Ovary (tissue), 10 donors: ENCODE measurements at regions of chr12 and their contacts with region 1.

Region 1: GRCh38 chr12:110888256-110888991 is 32.0 kb downstream of the MYL2 start:
- DNase-seq: no peak
- H3K4me3 ChIP-seq: no peak overlapping the region
- H3K27ac ChIP-seq: no peak overlapping the region
- H3K4me1 ChIP-seq: no peaks in the 10 kb centered on the region
- H3K27me3 ChIP-seq: no peaks in the 10 kb centered on the region
- CTCF ChIP-seq: no peak
- EP300 ChIP-seq: no peak
- POLR2A ChIP-seq: no peak

Region 2: DNA sequence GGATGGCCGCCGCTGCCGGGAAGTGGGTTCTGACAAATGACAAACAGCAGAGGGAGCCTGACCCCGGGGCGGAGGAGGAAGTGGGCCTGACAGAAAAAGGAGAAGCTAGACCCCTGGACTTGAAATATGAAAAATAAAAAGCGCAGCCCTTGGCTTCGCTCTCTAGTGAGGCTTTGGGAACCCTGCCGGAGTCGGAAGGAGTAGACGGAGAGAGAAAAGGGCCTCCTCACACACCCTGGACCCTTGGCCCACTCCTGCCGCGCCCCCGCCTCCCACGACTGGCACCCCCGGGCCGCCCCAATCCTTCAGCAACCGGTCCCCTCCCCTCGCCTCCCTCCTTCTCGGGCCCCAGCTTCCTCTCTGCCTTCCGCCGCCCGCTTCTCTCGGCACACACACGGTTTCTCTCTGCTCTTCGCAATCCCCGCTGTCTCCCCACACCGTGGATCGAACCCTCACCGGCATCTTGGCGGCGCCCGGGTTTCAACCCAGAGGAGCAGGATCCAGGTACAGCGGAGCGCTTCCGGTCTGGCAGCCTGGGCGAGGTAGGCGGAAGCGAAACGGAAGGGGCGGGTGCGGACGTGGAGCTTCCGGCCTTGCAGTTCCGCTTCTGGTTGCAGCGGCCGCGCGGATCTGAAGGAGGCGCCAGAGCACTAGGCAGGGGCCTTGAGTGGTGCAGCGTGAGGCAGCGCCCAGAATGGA is 438.5 kb before region 1 on chr12 and contains the start of gene ARPC3:
- intact Hi-C with region 1: loop called in 2 of 4 experiments (anchors 5 to 10 kb)
- DNase-seq: peak; percentile 93 to 96 (median 95)
- H3K4me3 ChIP-seq: peak within 1 kb of the TSS; percentile 90
- H3K27ac ChIP-seq: peak within 1 kb of the TSS in 1 of 2 donors; percentile 66
- H3K4me1 ChIP-seq: peaks cover 4% of the 10 kb centered on the region
- H3K27me3 ChIP-seq: no peaks in the 10 kb centered on the region
- CTCF ChIP-seq: peak; percentile 82 to 94 (median 89)
- EP300 ChIP-seq: no peak
- POLR2A ChIP-seq: peak; percentile 46
- total RNA-seq, gene ARPC3: 75.9 to 170 (median 92.9) TPM

Region 3: GRCh38 chr12:110468212-110469048 is 420.0 kb before region 1 on chr12 and contains the starts of genes FAM216A and GPN3:
- intact Hi-C with region 1: loop called in 2 of 4 experiments (anchors 5 to 10 kb)
- DNase-seq: peak; percentile 95 to 97 (median 96)
- H3K4me3 ChIP-seq: peak within 1 kb of the TSS; percentile 61
- H3K27ac ChIP-seq: peak within 1 kb of the TSS; percentile 73 to 99
- H3K4me1 ChIP-seq: peaks cover 8% of the 10 kb centered on the region
- H3K27me3 ChIP-seq: no peaks in the 10 kb centered on the region
- CTCF ChIP-seq: no peak
- EP300 ChIP-seq: no peak
- POLR2A ChIP-seq: peak; percentile 93
- total RNA-seq, gene FAM216A: 6.5 to 12.3 (median 10.1) TPM
- total RNA-seq, gene GPN3: 15.5 to 32.5 (median 23.2) TPM

Region 4: GRCh38 chr12:110613771-110614684 is 274.4 kb before region 1 on chr12 and contains the start of gene TCTN1:
- intact Hi-C with region 1: loop called in 1 of 4 experiments (anchors 10 kb)
- DNase-seq: peak; percentile 95 to 97 (median 95)
- H3K4me3 ChIP-seq: peak within 1 kb of the TSS; percentile 85
- H3K27ac ChIP-seq: peak within 1 kb of the TSS in 1 of 2 donors; percentile 38
- H3K4me1 ChIP-seq: peaks cover 5% of the 10 kb centered on the region
- H3K27me3 ChIP-seq: no peaks in the 10 kb centered on the region
- CTCF ChIP-seq: peak in 1 of 3 donors; percentile 19
- EP300 ChIP-seq: peak; percentile 28
- POLR2A ChIP-seq: peak; percentile 44
- total RNA-seq, gene TCTN1: 43.3 to 122 (median 47.9) TPM